IMR-90 (cell line): ENCODE measurements at regions of chr7 and their contacts with region 1.

Region 1: DNA sequence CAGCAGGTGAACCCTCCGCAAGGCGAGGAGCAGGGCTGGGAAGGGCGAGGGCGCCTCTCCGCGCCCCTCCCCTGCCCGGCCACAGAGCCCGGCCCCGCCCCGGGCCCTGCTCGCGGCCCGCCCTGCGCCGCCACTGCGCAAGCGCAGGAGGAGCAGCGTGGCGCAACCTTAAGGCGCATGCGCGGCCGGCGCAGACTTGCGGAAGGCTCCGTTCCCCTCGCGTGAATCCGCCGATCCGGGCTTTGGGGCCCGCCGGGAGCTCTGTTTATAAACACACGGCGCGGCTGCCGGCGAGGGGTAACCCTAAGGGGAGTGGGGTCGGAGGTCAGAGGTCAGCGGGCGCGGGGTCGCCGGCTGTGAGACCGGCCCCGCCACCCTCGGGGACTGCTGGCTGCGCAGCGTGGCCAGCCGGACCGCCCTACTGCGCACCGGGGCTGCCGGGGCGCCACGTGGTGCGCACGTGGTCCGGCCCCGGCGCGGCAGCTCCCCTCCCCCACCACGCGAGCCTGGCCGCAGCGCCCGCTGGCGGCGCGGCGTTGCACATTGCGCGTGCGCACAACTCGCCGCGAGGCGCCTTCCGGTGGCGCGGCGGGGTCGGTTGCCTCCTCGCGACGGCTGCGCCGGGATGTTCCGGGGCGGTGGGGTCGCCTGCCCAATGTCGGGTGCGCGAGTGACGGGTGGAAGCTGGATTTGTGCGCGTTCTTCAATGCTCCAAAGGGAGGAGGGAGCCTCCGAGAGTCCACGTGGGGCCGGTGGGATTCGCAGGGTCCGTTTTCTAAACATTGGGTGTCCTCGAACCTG is 40.2 kb upstream of the FOXK1 start:
- DNase-seq: peak; percentile 89
- ATAC-seq: peak; percentile 95
- H3K4me3 ChIP-seq: peak overlapping the region; percentile 74
- H3K27ac ChIP-seq: peak overlapping the region; percentile 97
- H3K4me1 ChIP-seq: 0 out of 2 replicates have a peak, but pooled peaks cover 2% of the 10 kb centered on the region
- H3K27me3 ChIP-seq: no peaks in the 10 kb centered on the region
- CTCF ChIP-seq: peak; percentile 72
- POLR2A ChIP-seq: peak; percentile 72; the same call in 1 of the 2 replicates
- RAD21 ChIP-seq: peak; percentile 44

Region 2: GRCh38 chr7:4667776-4668509 is 26.1 kb after region 1 on chr7:
- CTCF ChIA-PET with region 1: no interaction called
- POLR2A ChIA-PET with region 1: no interaction called
- dilution Hi-C with region 1: no loop called
- in situ Hi-C with region 1: no loop called
- intact Hi-C with region 1: loop called (anchors 1 kb)
- DNase-seq: peak; percentile 90
- ATAC-seq: peak; percentile 71
- H3K4me3 ChIP-seq: no peak overlapping the region
- H3K27ac ChIP-seq: peak overlapping the region; percentile 90
- H3K4me1 ChIP-seq: peaks cover 7% of the 10 kb centered on the region
- H3K27me3 ChIP-seq: no peaks in the 10 kb centered on the region
- CTCF ChIP-seq: no peak
- POLR2A ChIP-seq: no peak
- RAD21 ChIP-seq: no peak

Region 3: DNA sequence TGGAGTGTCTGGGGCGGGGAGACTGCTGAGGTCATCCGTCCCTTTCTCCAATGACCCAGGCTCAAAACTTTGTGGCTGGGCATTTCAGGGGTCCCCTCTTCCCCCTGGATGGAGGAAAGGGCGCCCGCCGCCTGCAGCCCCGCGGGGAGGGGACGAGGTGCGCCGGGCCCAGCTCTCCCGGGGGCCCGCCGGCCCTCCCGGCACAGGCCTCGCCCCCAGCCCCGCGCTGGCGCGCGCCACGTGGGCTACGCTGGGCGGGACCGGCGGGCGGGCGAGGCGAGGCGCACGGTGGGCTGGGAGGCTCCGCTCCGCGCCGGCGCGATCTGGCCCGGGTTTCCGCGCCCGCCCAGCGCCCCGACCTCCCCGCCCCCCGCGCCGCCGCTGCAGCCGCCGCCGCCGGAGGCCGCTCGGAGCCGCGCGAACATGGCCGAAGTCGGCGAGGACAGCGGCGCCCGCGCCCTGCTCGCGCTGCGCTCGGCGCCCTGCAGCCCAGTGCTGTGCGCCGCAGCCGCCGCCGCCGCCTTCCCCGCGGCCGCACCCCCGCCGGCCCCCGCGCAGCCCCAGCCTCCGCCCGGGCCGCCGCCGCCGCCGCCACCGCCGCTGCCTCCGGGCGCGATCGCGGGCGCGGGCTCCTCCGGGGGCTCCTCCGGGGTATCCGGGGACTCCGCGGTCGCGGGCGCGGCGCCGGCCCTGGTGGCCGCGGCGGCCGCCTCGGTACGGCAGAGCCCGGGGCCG is 40.2 kb after region 1 on chr7 and contains the start of gene FOXK1:
- CTCF ChIA-PET with region 1: interaction called, 3 read pairs
- POLR2A ChIA-PET with region 1: interaction called, 6 read pairs
- dilution Hi-C with region 1: no loop called
- in situ Hi-C with region 1: no loop called
- intact Hi-C with region 1: loop called (anchors 1 kb)
- DNase-seq: peak; percentile 65
- ATAC-seq: peak; percentile 88
- H3K4me3 ChIP-seq: peak within 1 kb of the TSS; percentile 91
- H3K27ac ChIP-seq: peak within 1 kb of the TSS; percentile 100
- H3K4me1 ChIP-seq: peaks cover 9% of the 10 kb centered on the region
- H3K27me3 ChIP-seq: no peaks in the 10 kb centered on the region
- CTCF ChIP-seq: 0 out of 2 replicates have a peak, but pooled peaks have one; percentile 11
- POLR2A ChIP-seq: peak; percentile 52; the same call in 1 of the 2 replicates
- RAD21 ChIP-seq: peak; percentile 20; the same call in 1 of the 2 replicates
- total RNA-seq, gene FOXK1: 4.3 and 5.0 TPM in 2 replicates